ENCODE measurements at regions of chr9 and their contacts with region 1.

Region 1: DNA sequence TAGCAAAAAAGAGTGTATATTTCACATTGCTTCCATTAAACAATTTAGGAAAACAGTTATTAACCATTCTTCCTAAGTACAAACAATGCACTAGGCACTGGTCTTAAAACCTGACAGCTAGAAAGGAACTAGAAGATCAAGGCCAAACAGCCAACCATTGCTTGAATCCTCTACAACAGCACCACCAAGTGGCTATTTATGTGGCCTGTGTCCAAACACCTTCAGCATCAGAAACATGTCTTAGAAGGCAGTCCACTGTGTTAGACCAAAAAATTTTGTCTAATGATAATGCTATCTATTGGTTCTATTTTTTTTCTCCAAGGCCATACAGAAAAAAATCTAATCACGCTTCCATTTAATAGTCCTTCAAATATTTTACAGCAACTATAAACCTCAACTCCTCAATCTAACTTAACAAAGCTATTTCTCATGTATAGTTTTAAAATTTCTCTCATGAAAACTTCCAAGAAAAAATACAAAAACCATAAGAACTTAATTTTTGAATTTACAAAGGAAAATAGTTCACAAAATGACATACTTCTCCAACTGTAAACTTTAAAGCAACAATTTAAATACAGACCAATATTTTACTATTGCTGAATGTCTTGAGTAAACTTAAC is 36.1 kb downstream of the CAAP1 start:
- DNase-seq: no peak
- H3K4me3 ChIP-seq: no peak overlapping the region
- H3K27ac ChIP-seq: no peak overlapping the region
- H3K4me1 ChIP-seq: no peaks in the 10 kb centered on the region
- H3K27me3 ChIP-seq: no peaks in the 10 kb centered on the region
- CTCF ChIP-seq: peak in 2 of 3 experiments; percentile 82 to 85; a peak in 3 of 4 replicates
- EP300 ChIP-seq: no peak
- POLR2A ChIP-seq: no peak
- RAD21 ChIP-seq: peak; percentile 93 to 96

Region 2: DNA sequence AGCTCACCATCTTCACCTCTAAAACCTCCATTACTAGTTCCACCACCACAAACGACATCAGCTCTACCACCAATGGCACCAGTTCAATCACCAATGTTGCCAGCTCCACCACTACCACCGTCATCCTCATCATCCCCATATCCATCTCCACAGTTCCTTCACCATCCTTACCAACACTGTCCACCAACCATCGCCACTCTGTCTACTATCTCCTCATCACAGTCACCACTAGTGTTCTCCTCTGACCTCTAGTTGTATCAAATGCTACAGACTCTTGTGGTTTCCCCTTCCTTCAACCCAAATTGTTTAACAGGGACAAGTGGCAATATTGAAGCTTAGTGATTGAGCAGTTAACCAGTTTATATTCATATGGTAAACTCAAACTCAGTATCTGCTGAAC is 146.5 kb before region 1 on chr9:
- CTCF ChIA-PET with region 1: no interaction called
- POLR2A ChIA-PET with region 1: no interaction called
- DNase-seq: no peak
- H3K4me3 ChIP-seq: no peak overlapping the region
- H3K27ac ChIP-seq: no peak overlapping the region
- H3K4me1 ChIP-seq: no peaks in the 10 kb centered on the region
- H3K27me3 ChIP-seq: no peaks in the 10 kb centered on the region
- CTCF ChIP-seq: no peak
- EP300 ChIP-seq: no peak
- POLR2A ChIP-seq: no peak
- RAD21 ChIP-seq: no peak

Region 3: DNA sequence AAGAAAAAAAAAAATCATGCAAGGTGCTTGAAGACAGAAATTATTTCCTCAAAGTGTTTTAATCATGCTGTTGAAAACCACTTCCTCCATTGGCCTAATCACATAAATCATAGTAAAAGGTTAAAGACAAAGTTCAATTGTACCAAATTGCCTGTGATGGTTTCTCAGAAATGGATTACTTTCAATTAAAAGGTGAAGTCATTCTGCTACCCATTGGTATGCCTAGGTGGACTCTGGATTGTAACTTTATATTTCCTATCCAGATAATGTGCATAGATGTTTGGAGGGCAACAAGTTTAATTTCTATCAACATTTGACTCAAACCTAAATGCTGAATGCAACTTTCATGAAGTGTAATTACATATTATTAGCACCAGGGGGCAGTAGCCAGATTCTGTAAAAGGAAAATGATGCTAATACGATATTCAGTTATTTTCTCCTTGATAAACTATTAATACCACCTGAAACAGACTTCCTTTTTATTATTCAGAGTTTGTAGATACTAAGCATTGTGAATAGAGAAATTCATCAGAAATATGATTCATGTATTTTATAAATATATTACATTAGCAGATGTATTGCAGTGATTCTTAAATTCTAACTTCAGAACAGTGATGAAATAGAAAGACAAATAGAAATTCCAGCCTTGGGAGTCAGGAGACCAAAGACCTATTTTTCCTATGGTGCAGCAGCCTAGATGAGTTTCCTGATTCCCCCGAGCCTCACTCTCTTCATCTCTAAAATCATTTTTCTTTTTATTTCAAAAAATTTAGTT is 112.1 kb before region 1 on chr9:
- CTCF ChIA-PET with region 1: interaction called, 14 read pairs
- POLR2A ChIA-PET with region 1: no interaction called
- DNase-seq: no peak
- H3K4me3 ChIP-seq: no peak overlapping the region
- H3K27ac ChIP-seq: no peak overlapping the region
- H3K4me1 ChIP-seq: peaks cover 0 to 11% (median 5%) of the 10 kb centered on the region in 4 experiments; a peak in 5 of 7 replicates
- H3K27me3 ChIP-seq: no peaks in the 10 kb centered on the region
- CTCF ChIP-seq: peak in 2 of 3 experiments; percentile 19 to 61; a peak in 2 of 4 replicates
- EP300 ChIP-seq: no peak
- POLR2A ChIP-seq: no peak
- RAD21 ChIP-seq: peak in 1 of 2 experiments; percentile 54; a peak in 3 of 4 replicates

Region 4: DNA sequence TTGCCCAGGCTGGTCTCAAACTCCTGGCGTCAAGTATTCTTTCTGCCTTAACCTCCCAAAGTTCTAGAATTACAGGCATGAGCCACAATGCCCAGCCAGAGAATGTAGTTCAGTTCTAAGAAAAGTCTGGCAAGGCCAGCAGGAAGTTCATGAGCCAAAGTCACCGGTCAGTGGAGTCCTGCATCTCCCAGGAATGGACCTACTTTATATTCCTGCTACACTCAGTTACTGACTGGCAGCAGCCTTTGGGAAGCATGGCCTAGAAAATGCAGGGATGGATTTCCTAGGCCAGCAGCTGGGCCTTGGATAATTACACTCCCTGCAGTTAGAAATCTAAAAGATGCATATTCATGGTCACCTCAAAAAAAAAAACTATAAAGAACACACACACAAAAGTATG is 99.6 kb before region 1 on chr9:
- CTCF ChIA-PET with region 1: interaction called, 16 read pairs
- POLR2A ChIA-PET with region 1: no interaction called
- DNase-seq: no peak
- H3K4me3 ChIP-seq: no peak overlapping the region
- H3K27ac ChIP-seq: no peak overlapping the region
- H3K4me1 ChIP-seq: peaks cover 0 to 8% (median 5%) of the 10 kb centered on the region in 4 experiments; a peak in 5 of 7 replicates
- H3K27me3 ChIP-seq: no peaks in the 10 kb centered on the region
- CTCF ChIP-seq: no peak
- EP300 ChIP-seq: no peak
- POLR2A ChIP-seq: no peak
- RAD21 ChIP-seq: no peak

Region 5: GRCh38 chr9:26779072-26779471 is 77.5 kb before region 1 on chr9:
- CTCF ChIA-PET with region 1: no interaction called
- POLR2A ChIA-PET with region 1: no interaction called
- DNase-seq: no peak
- H3K4me3 ChIP-seq: no peak overlapping the region
- H3K27ac ChIP-seq: no peak overlapping the region
- H3K4me1 ChIP-seq: no peaks in the 10 kb centered on the region
- H3K27me3 ChIP-seq: no peaks in the 10 kb centered on the region
- CTCF ChIP-seq: no peak
- EP300 ChIP-seq: no peak
- POLR2A ChIP-seq: no peak
- RAD21 ChIP-seq: no peak

Measured in H1 (cell line).